ENCODE measurements at regions of chr1 and their contacts with region 1.

Region 1: DNA sequence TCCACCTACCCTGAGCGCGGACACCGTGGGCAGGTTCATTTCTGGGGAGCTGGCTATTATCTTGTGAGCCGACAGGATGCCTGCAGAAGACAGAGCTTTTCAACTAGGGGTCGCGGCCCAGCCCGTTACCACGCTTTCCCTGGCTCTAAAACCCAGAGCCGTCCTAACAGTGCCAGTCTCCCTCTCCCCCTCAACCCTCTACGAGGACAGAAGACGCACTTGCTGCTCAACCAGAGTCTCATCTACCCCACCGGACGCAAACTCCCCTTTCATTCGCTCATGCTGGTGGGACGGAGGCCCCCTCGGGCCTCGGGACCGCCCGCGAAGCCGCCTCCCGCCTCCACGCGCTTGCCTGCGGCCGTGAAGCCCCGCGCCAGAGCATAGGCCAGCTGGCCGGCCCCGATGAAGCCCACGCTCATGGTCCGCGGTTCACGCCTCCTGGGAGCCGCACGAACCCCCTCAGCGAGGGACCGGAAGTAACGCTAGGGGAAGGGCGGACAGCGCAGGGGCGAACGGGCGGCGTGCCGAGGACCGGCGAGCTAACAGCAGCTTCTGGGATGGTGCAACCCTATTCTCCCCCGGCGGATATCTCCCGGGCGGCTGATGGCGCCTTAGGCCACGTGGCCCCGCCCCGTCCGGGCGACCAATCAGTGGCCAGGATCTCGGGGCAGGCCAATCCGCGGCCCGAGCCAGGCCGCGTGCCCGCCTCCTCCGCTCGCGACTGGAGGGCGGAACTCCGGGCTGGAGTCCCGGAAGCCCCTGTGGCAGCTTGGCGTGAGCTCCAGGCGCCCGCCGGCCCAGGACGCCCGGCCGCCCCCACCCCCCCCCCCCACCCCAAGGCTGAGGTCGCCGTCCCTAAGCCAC is at the start of gene PYCR2:
- DNase-seq: peak; percentile 99
- ATAC-seq: peak; percentile 91
- H3K4me3 ChIP-seq: peak within 1 kb of the TSS; percentile 89
- H3K27ac ChIP-seq: peak within 1 kb of the TSS; percentile 72
- H3K4me1 ChIP-seq: peaks cover 46% of the 10 kb centered on the region
- H3K27me3 ChIP-seq: no peaks in the 10 kb centered on the region
- CTCF ChIP-seq: no peak
- total RNA-seq, gene PYCR2: 57.7 and 69.0 TPM in 2 replicates

Region 2: GRCh38 chr1:225871359-225872074 is 52.4 kb before region 1 on chr1:
- CTCF ChIA-PET with region 1: interaction called, 4 read pairs
- POLR2A ChIA-PET with region 1: interaction called, 14 read pairs
- intact Hi-C with region 1: loop called (anchors 1 kb)
- DNase-seq: peak; percentile 99
- ATAC-seq: peak; percentile 86
- H3K4me3 ChIP-seq: peak overlapping the region; percentile 26
- H3K27ac ChIP-seq: peak overlapping the region; percentile 92
- H3K4me1 ChIP-seq: peaks cover 68% of the 10 kb centered on the region
- H3K27me3 ChIP-seq: no peaks in the 10 kb centered on the region
- CTCF ChIP-seq: no peak

Region 3: DNA sequence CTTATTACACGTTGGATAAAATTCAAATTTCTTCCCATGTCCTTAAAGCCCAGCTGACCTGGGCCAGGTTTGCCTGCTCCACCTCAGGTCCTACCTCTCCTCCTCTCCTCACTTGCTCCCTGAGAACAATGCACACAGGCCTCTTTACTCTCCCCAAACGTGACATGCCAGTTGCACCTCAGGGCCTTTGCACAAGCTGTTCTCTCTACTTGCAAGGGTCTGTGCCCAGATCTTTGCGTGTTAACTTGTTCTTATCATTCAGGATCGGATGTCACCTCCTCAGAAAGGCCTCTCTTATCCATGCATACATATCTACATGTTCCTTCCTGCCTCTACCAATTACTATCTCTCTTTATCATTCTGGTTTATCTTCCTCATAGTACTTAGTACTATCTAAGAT is 20.3 kb before region 1 on chr1:
- CTCF ChIA-PET with region 1: no interaction called
- POLR2A ChIA-PET with region 1: no interaction called
- intact Hi-C with region 1: no loop called
- DNase-seq: no peak
- ATAC-seq: no peak
- H3K4me3 ChIP-seq: no peak overlapping the region
- H3K27ac ChIP-seq: no peak overlapping the region
- H3K4me1 ChIP-seq: no peaks in the 10 kb centered on the region
- H3K27me3 ChIP-seq: no peaks in the 10 kb centered on the region
- CTCF ChIP-seq: no peak

Measured in PC-3 (cell line).